ENCODE measurements at regions of chr6 and their contacts with region 1.

Region 1: DNA sequence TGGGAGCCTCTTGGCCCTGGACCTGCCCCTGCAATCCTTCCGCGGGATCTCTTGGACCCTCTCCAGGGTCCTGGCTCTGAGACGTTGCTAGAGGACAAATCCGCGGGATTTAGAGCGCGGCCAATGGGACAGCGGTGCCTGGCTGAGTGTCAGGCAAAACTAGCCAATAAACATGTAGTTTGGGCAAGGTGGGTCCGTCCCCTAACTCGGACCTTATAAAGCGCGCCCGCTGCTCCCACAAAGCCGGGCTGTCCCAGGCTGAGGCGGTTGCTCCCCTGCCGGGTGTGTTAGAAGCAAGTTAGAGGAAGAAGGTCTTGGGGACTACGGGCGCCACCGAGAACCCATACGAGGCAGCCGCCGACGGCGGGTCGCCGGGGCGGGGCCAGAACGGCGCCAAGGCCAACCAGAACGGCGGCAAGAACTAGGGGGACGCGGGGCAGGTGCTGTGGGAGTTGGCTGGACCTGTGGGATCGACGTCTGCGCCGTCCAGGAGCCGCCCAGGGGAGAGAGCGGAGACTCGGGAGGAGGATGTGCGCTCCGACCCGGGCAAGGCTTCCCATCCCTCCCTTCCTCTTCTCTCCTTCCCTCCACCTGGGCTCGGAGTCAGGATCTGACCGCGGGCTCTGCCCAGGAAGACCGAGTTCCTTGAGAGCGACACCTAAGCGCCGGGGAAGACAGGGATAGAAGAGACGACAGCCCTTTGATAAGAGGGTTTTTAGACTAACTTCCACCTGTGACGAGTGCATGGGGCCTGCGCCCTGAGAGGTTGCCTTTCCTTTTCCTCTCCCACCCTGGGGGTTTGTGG is 6.5 kb upstream of the TMEM14A start:
- DNase-seq: peak; percentile 97
- H3K4me3 ChIP-seq: peak overlapping the region; percentile 65 to 75
- H3K27ac ChIP-seq: peak overlapping the region; percentile 39 to 87; a peak in 2 of 4 replicates
- H3K4me1 ChIP-seq: peaks cover 7 to 32% of the 10 kb centered on the region in 2 experiments; a peak in 3 of 4 replicates
- H3K27me3 ChIP-seq: no peaks in the 10 kb centered on the region
- CTCF ChIP-seq: no peak
- EP300 ChIP-seq: no peak
- RAD21 ChIP-seq: no peak

Region 2: GRCh38 chr6:52407467-52407866 is 256.9 kb before region 1 on chr6:
- CTCF ChIA-PET with region 1: interaction called, 14 read pairs
- POLR2A ChIA-PET with region 1: no interaction called
- DNase-seq: peak; percentile 65
- H3K4me3 ChIP-seq: no peak overlapping the region
- H3K27ac ChIP-seq: no peak overlapping the region
- H3K4me1 ChIP-seq: peaks cover 0 to 11% of the 10 kb centered on the region in 2 experiments; a peak in 1 of 4 replicates
- H3K27me3 ChIP-seq: no peaks in the 10 kb centered on the region
- CTCF ChIP-seq: peak; percentile 68
- EP300 ChIP-seq: no peak
- RAD21 ChIP-seq: peak; percentile 85

Region 3: GRCh38 chr6:52419809-52420670 is 244.3 kb before region 1 on chr6 and contains the start of gene EFHC1:
- CTCF ChIA-PET with region 1: interaction called, 94 read pairs
- POLR2A ChIA-PET with region 1: interaction called, 5 read pairs
- DNase-seq: peak; percentile 94
- H3K4me3 ChIP-seq: peak within 1 kb of the TSS; percentile 78 to 88
- H3K27ac ChIP-seq: peak within 1 kb of the TSS; percentile 93 to 97
- H3K4me1 ChIP-seq: peaks cover 23 to 54% of the 10 kb centered on the region in 2 experiments
- H3K27me3 ChIP-seq: no peaks in the 10 kb centered on the region
- CTCF ChIP-seq: no peak
- EP300 ChIP-seq: no peak
- RAD21 ChIP-seq: no peak
- polyA plus RNA-seq, gene EFHC1: 39.4 and 54.3 TPM in 2 replicates

Region 4: DNA sequence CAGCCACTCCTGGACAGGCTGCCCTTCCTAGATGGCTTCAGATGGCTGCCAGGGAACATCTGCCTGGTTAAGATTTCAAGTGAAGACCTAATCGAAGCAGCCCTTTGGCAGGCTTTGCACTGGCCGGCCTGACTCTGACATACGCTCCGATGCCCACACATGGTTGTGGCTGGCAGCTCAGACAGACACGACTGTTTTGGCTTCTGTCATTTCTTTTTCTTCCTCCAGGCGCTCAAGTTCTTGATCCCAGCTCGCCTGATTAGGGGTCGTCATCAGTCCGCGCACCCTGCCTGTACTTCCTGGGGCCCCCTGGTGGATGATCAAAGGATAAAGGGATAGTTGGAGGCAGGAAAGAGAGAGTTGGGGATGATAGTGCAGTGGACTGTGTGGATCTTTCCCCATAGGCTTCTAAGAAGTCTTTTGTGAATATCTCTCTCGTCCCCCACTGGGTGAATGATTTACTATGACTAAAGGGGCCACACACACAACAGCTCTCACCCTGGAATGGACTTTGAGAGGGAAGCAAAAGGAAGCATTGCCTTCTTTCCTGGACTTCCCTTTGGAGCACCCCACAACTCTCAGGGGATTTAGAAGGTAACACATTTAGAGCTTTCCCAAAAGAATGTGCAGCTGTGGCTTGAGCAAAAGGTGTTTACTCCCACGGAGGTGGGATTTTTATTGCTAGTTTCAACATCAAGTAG is 66.1 kb before region 1 on chr6:
- CTCF ChIA-PET with region 1: interaction called, 28 read pairs
- POLR2A ChIA-PET with region 1: no interaction called
- DNase-seq: peak; percentile 74
- H3K4me3 ChIP-seq: peak overlapping the region; percentile 17 to 34; a peak in 2 of 4 replicates
- H3K27ac ChIP-seq: peak overlapping the region; percentile 86 to 97
- H3K4me1 ChIP-seq: peaks cover 47 to 49% of the 10 kb centered on the region in 2 experiments
- H3K27me3 ChIP-seq: no peaks in the 10 kb centered on the region
- CTCF ChIP-seq: peak; percentile 80
- EP300 ChIP-seq: peak in 1 of 2 experiments; percentile 58; a peak in 2 of 4 replicates
- RAD21 ChIP-seq: peak; percentile 81

Region 5: GRCh38 chr6:52605610-52606185 is 58.7 kb before region 1 on chr6:
- CTCF ChIA-PET with region 1: interaction called, 10 read pairs
- POLR2A ChIA-PET with region 1: no interaction called
- DNase-seq: no peak
- H3K4me3 ChIP-seq: no peak overlapping the region
- H3K27ac ChIP-seq: no peak overlapping the region
- H3K4me1 ChIP-seq: peaks cover 16 to 25% of the 10 kb centered on the region in 2 experiments
- H3K27me3 ChIP-seq: no peaks in the 10 kb centered on the region
- CTCF ChIP-seq: no peak
- EP300 ChIP-seq: no peak
- RAD21 ChIP-seq: no peak

Region 6: GRCh38 chr6:52640170-52640569 is 24.2 kb before region 1 on chr6:
- CTCF ChIA-PET with region 1: interaction called, 15 read pairs
- POLR2A ChIA-PET with region 1: interaction called, 4 read pairs
- DNase-seq: no peak
- H3K4me3 ChIP-seq: no peak overlapping the region
- H3K27ac ChIP-seq: no peak overlapping the region
- H3K4me1 ChIP-seq: peaks cover 0 to 14% of the 10 kb centered on the region in 2 experiments; a peak in 1 of 4 replicates
- H3K27me3 ChIP-seq: no peaks in the 10 kb centered on the region
- CTCF ChIP-seq: no peak
- EP300 ChIP-seq: no peak
- RAD21 ChIP-seq: no peak

Region 7: GRCh38 chr6:52647199-52647598 is 17.2 kb before region 1 on chr6:
- CTCF ChIA-PET with region 1: interaction called, 75 read pairs
- POLR2A ChIA-PET with region 1: no interaction called
- DNase-seq: no peak
- H3K4me3 ChIP-seq: no peak overlapping the region
- H3K27ac ChIP-seq: no peak overlapping the region
- H3K4me1 ChIP-seq: peaks cover 3 to 15% of the 10 kb centered on the region in 2 experiments; a peak in 3 of 4 replicates
- H3K27me3 ChIP-seq: no peaks in the 10 kb centered on the region
- CTCF ChIP-seq: no peak
- EP300 ChIP-seq: no peak
- RAD21 ChIP-seq: no peak

Measured in SK-N-SH (cell line).